ENCODE measurements at regions of chr5 and their contacts with region 1.

Region 1: GRCh38 chr5:14270209-14270702 is 127.1 kb downstream of the TRIO start:
- DNase-seq: no peak
- H3K4me3 ChIP-seq: no peak overlapping the region
- CTCF ChIP-seq: no peak
- POLR2A ChIP-seq: no peak

Region 2: GRCh38 chr5:14008819-14009311 is 261.4 kb before region 1 on chr5:
- intact Hi-C with region 1: loop called (anchors 10 kb)
- DNase-seq: no peak
- H3K4me3 ChIP-seq: no peak overlapping the region
- CTCF ChIP-seq: no peak
- POLR2A ChIP-seq: no peak

Region 3: DNA sequence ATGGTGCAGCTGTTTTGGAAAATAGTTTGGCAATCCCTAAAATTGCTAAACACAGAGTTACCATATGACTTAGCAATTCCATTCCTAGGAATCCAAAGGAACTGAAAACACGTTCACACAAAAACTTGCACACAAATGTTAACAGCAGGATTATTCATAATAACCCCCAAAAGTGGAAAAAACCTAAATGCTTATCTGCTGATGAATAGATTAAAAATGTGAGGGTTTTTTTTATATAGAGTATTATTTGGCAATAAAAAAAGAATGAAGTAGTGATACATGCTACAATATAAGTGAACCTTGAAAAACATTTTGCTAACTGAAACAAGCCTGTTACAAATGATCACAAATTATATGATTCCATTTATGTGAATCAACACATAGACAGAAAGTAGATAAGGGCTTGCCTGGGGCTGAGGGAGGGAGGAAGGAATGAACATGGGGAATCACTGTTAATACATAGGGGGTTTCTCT is 172.2 kb before region 1 on chr5:
- intact Hi-C with region 1: no loop called
- DNase-seq: no peak
- H3K4me3 ChIP-seq: no peak overlapping the region
- CTCF ChIP-seq: no peak
- POLR2A ChIP-seq: no peak

Measured in lower leg skin (tissue), 4 donors.